Activated CD8-positive, alpha-beta T cell treated with anti-CD3 and anti-CD28 coated beads for 36 hours (primary cell): ENCODE measurements at regions of chr6 and their contacts with region 1.

Region 1: GRCh38 chr6:27177485-27178406 is 69.8 kb upstream of the PRSS16 start:
- DNase-seq: peak; percentile 86
- ATAC-seq: peak; percentile 88
- H3K4me3 Mint-ChIP-seq: peak overlapping the region; percentile 94
- H3K27ac Mint-ChIP-seq: peak overlapping the region; percentile 87
- H3K4me1 Mint-ChIP-seq: peaks cover 3% of the 10 kb centered on the region
- H3K27me3 Mint-ChIP-seq: peaks cover 2% of the 10 kb centered on the region
- CTCF ChIP-seq: peak; percentile 53

Region 2: DNA sequence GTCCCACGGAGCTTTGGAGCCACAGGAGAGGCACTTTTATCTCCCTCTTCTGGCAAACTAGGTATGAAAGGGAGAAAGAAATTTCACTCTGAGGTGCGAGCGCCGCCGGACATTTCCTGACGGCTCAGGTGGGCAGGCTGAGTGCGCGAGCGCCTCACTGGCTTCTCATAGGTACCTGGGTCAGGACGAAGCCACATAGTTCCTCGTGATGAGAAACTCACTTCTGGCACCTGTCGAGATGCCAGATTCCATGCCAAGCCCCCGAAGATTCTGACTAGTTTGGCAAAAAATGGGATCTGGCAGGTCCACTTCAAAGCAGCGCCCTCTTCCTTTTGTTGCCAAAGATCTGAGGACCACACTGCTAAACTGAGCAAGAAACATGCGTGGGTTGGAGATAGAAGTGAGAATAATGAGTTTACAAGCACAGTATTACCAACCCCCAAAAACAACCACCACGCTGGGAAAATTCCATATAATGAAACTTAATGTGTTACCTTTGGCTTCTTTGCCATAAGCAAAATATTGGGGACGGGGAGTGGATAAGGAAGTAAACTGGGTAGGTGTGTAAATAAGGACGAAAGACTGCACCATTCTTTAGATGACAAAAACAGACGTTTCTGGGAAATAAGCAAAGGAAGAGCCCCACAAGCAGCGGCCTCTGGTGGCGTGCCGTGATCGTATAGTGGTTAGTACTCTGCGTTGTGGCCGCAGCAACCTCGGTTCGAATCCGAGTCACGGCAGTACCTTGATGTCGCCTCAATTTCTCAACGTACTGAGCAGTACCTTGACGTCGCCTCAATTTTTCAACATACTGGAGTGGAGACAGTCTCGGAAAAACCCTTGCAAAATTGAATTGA is 20.1 kb before region 1 on chr6:
- CTCF ChIA-PET with region 1: interaction called, 13 read pairs
- POLR2A ChIA-PET with region 1: interaction called, 6 read pairs
- intact Hi-C with region 1: no loop called
- DNase-seq: peak; percentile 92
- ATAC-seq: peak; percentile 80
- H3K4me3 Mint-ChIP-seq: peak overlapping the region; percentile 76
- H3K27ac Mint-ChIP-seq: peak overlapping the region; percentile 77
- H3K4me1 Mint-ChIP-seq: peaks cover 47% of the 10 kb centered on the region
- H3K27me3 Mint-ChIP-seq: no peaks in the 10 kb centered on the region
- CTCF ChIP-seq: peak; percentile 36

Region 3: GRCh38 chr6:27188885-27189418 is 11.2 kb after region 1 on chr6:
- CTCF ChIA-PET with region 1: interaction called, 14 read pairs
- POLR2A ChIA-PET with region 1: interaction called, 3 read pairs
- intact Hi-C with region 1: no loop called
- DNase-seq: peak; percentile 73
- ATAC-seq: peak; percentile 89
- H3K4me3 Mint-ChIP-seq: peak overlapping the region; percentile 93
- H3K27ac Mint-ChIP-seq: peak overlapping the region; percentile 72
- H3K4me1 Mint-ChIP-seq: peaks cover 7% of the 10 kb centered on the region
- H3K27me3 Mint-ChIP-seq: peaks cover 1% of the 10 kb centered on the region
- CTCF ChIP-seq: peak; percentile 85

Region 4: GRCh38 chr6:27795697-27796494 is 618.1 kb after region 1 on chr6:
- CTCF ChIA-PET with region 1: interaction called, 19 read pairs
- POLR2A ChIA-PET with region 1: no interaction called
- intact Hi-C with region 1: no loop called
- DNase-seq: peak; percentile 68
- ATAC-seq: peak; percentile 69
- H3K4me3 Mint-ChIP-seq: no peak overlapping the region
- H3K27ac Mint-ChIP-seq: no peak overlapping the region
- H3K4me1 Mint-ChIP-seq: peaks cover 30% of the 10 kb centered on the region
- H3K27me3 Mint-ChIP-seq: peaks cover 10% of the 10 kb centered on the region
- CTCF ChIP-seq: peak; percentile 72